GM12878 (cell line): ENCODE measurements at regions of chr6 and their contacts with region 1.

Region 1: GRCh38 chr6:109440331-109441068 is at the starts of genes PPIL6 and SMPD2:
- DNase-seq: no peak
- ATAC-seq: peak; percentile 91
- H3K4me3 ChIP-seq: peak within 1 kb of the TSS; percentile 87
- H3K27ac ChIP-seq: peak within 1 kb of the TSS; percentile 81
- H3K4me1 ChIP-seq: peaks cover 12% of the 10 kb centered on the region
- H3K27me3 ChIP-seq: no peaks in the 10 kb centered on the region
- CTCF ChIP-seq: peak in 2 of 3 experiments; percentile 18 to 33; a peak in 3 of 6 replicates
- EP300 ChIP-seq: no peak
- POLR2A ChIP-seq: peak; percentile 47; the same call in 1 of the 2 replicates
- RAD21 ChIP-seq: no peak
- polyA plus RNA-seq, gene PPIL6: not detected
- polyA plus RNA-seq, gene SMPD2: 0.06 to 0.73 TPM

Region 2: DNA sequence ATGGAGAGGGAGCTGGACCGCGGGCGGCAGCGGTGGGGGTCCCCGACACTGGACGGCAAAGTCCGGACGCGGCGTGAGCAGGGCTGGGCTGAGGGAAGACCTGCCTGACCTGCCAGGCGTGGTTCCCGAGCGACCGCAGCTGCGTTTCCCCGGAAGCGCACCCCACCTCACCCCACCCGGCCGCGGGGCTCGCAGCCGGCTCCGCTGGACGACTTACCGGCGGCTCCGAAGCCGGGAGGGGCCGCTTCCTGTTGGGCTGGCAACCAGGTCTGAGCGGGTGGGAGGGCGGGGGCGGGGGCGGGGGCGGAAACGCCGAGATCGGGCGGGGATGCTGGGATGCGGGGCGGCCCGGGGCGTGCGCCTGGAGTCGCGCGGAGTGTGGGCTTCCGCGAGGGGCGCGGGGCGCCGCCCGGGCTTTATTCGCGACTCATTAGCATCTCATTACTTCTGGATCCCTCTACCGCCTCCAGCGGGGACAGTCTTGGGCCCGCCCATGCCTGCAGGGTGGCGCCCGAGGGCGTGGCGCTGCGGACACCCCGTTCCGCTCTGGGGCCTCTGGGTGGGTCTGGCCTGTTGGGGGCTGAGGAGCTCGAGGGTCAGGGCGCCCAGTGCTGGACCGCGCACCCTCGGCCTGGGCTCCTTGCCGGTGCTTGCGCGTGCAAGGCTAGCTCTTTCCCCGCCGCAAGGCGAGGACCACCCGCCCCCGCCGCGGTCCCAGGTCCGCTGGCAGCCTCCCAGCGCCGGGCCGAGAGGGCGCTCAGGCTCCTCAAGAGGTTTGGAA is 15.2 kb after region 1 on chr6 and contains the start of gene MICAL1:
- CTCF ChIA-PET with region 1: interaction called, 30 read pairs
- POLR2A ChIA-PET with region 1: interaction called, 74 read pairs
- RAD21 ChIA-PET with region 1: interaction called, 17 read pairs
- SMC1A ChIA-PET with region 1: interaction called, 34 read pairs
- in situ Hi-C with region 1: no loop called
- intact Hi-C with region 1: no loop called
- DNase-seq: peak; percentile 45
- ATAC-seq: peak; percentile 78
- H3K4me3 ChIP-seq: peak within 1 kb of the TSS; percentile 89
- H3K27ac ChIP-seq: peak within 1 kb of the TSS; percentile 98
- H3K4me1 ChIP-seq: peaks cover 54% of the 10 kb centered on the region
- H3K27me3 ChIP-seq: no peaks in the 10 kb centered on the region
- CTCF ChIP-seq: peak in 2 of 3 experiments; percentile 19 to 45; a peak in 4 of 6 replicates
- EP300 ChIP-seq: 0 out of 4 replicates have a peak, but pooled peaks of 1 of the 2 experiments have one; percentile 20
- POLR2A ChIP-seq: peak; percentile 82
- RAD21 ChIP-seq: no peak
- polyA plus RNA-seq, gene MICAL1: 0.32 to 1.3 TPM

Region 3: DNA sequence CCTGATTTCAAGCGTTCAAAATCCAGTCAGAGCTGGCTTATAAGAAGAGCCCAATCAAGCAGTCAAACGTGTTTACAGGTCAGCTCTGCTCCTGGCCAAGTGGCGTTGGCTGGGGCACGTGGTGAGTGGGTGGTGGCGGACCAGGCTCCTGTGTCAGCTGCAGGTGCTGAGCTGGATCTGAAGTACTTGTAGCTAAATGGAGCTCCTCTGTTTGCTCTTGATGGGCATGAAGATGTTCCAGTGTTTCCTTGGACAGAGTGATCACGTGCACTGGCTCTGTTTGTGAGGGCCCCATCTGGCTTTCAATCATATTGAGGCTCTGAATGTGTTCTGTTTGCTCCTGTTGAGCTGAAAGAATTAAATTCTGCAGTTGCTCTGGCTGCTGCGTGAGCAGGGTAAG is 25.3 kb after region 1 on chr6:
- CTCF ChIA-PET with region 1: interaction called, 18 read pairs
- POLR2A ChIA-PET with region 1: interaction called, 4 read pairs
- RAD21 ChIA-PET with region 1: interaction called, 17 read pairs
- SMC1A ChIA-PET with region 1: interaction called, 11 read pairs
- in situ Hi-C with region 1: no loop called
- intact Hi-C with region 1: no loop called
- DNase-seq: no peak
- ATAC-seq: peak; percentile 32; the same call in 1 of the 3 replicates
- H3K4me3 ChIP-seq: no peak overlapping the region
- H3K27ac ChIP-seq: no peak overlapping the region
- H3K4me1 ChIP-seq: no peaks in the 10 kb centered on the region; the same call in none of the 2 replicates
- H3K27me3 ChIP-seq: no peaks in the 10 kb centered on the region
- CTCF ChIP-seq: no peak
- EP300 ChIP-seq: no peak
- POLR2A ChIP-seq: no peak
- RAD21 ChIP-seq: no peak

Region 4: GRCh38 chr6:109477725-109478124 is 37.2 kb after region 1 on chr6:
- CTCF ChIA-PET with region 1: interaction called, 21 read pairs
- POLR2A ChIA-PET with region 1: interaction called, 9 read pairs
- RAD21 ChIA-PET with region 1: interaction called, 34 read pairs
- SMC1A ChIA-PET with region 1: interaction called, 25 read pairs
- in situ Hi-C with region 1: no loop called
- intact Hi-C with region 1: loop called (anchors 1 kb)
- DNase-seq: no peak
- ATAC-seq: peak; percentile 77
- H3K4me3 ChIP-seq: peak overlapping the region; percentile 56
- H3K27ac ChIP-seq: peak overlapping the region; percentile 64
- H3K4me1 ChIP-seq: peaks cover 10% of the 10 kb centered on the region
- H3K27me3 ChIP-seq: no peaks in the 10 kb centered on the region
- CTCF ChIP-seq: no peak
- EP300 ChIP-seq: no peak
- POLR2A ChIP-seq: no peak
- RAD21 ChIP-seq: no peak

Region 5: DNA sequence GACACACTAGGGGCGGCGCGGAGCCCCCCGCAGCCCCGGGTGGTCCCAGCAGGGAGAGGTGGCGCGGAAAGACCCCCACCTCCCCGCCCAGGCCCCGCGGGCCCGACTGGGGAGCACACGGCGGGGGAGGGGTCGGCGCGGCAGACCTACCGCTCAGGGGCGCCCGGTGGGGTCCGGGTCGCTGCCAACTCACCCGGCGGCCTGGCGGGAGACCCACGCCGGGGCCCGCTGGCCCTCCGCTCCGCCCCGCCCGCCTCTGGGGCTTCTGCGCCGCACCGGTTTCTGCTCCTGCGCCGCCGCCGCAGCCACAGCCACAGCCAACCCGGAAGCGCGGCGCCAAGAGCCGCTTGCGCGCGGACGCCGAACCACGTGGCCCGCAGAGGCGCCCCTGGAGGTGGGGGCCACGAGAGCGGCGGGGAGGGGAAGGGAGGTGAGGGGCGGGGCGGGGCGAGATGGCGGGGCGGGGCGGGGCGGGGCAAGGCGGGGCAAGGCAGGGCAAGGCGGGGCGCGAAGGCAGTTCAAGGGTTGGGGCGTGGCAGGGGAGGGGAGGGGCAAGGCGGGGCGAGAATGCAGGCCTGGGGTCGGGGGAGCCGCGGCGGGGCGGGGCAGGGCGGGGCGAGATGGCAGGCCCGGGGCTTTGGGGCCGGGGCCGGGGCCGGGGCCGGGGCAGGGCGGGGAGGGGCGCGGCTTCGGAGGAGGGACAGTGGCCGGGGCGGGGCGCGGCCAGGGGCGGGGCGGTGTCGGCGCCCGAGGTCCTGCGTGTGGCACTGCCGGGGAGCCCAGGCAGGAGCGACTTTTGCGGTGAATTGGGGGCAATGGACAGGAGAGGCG is 42.6 kb after region 1 on chr6 and contains the start of gene ZBTB24:
- CTCF ChIA-PET with region 1: interaction called, 21 read pairs
- POLR2A ChIA-PET with region 1: interaction called, 9 read pairs
- RAD21 ChIA-PET with region 1: interaction called, 34 read pairs
- SMC1A ChIA-PET with region 1: interaction called, 25 read pairs
- in situ Hi-C with region 1: no loop called
- intact Hi-C with region 1: loop called (anchors 1 kb)
- DNase-seq: peak; percentile 41
- ATAC-seq: peak; percentile 89
- H3K4me3 ChIP-seq: peak within 1 kb of the TSS; percentile 86
- H3K27ac ChIP-seq: peak within 1 kb of the TSS; percentile 73
- H3K4me1 ChIP-seq: no peaks in the 10 kb centered on the region; the same call in 1 of the 2 replicates
- H3K27me3 ChIP-seq: no peaks in the 10 kb centered on the region
- CTCF ChIP-seq: no peak
- EP300 ChIP-seq: no peak
- POLR2A ChIP-seq: peak; percentile 86
- RAD21 ChIP-seq: no peak
- polyA plus RNA-seq, gene ZBTB24: 2.9 to 3.0 TPM

Region 6: DNA sequence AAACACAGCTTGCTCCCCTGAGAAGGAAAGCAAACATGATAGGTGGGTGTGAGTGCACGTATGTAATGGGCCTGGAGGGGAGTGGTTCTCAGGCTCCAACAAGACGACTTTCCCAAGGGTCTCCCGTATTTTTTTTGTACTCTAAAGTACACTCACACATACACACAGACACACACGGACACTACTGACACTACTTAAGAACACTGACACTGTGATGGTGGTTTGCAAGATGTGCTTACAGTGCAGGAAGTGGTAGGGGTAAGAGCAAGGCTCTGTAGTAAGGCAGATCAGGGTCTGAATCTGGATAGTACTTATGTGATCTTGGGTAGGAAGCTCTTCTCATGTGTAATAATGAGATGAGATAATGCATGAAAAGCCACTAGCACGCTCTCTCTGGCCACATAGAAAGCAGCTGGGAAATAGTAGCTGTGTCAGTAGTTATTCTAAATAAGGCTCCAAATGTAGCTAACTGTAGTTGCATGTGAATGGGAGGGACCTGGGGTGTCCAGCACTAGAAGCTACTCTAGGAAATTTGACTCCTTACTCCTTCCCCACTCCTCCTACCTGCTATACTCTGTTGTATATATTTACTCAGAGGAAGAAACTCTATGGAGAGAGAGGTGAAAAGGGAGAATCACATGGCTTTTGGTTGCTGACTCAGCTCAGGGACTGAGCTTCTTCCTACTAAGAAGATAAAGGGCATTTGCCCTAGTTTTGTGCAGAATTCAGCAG is 50.9 kb after region 1 on chr6:
- CTCF ChIA-PET with region 1: no interaction called
- POLR2A ChIA-PET with region 1: interaction called, 5 read pairs
- RAD21 ChIA-PET with region 1: interaction called, 4 read pairs
- SMC1A ChIA-PET with region 1: interaction called, 10 read pairs
- in situ Hi-C with region 1: no loop called
- intact Hi-C with region 1: no loop called
- DNase-seq: no peak
- ATAC-seq: peak; percentile 89
- H3K4me3 ChIP-seq: no peak overlapping the region
- H3K27ac ChIP-seq: no peak overlapping the region
- H3K4me1 ChIP-seq: no peaks in the 10 kb centered on the region
- H3K27me3 ChIP-seq: no peaks in the 10 kb centered on the region; a peak in 1 of 4 replicates
- CTCF ChIP-seq: no peak
- EP300 ChIP-seq: no peak
- POLR2A ChIP-seq: no peak
- RAD21 ChIP-seq: no peak

Region 7: GRCh38 chr6:109963598-109964170 is 523.2 kb after region 1 on chr6:
- CTCF ChIA-PET with region 1: no interaction called
- POLR2A ChIA-PET with region 1: no interaction called
- RAD21 ChIA-PET with region 1: no interaction called
- SMC1A ChIA-PET with region 1: no interaction called
- in situ Hi-C with region 1: no loop called
- intact Hi-C with region 1: no loop called
- DNase-seq: no peak
- ATAC-seq: no peak
- H3K4me3 ChIP-seq: no peak overlapping the region
- H3K27ac ChIP-seq: no peak overlapping the region
- H3K4me1 ChIP-seq: no peaks in the 10 kb centered on the region
- H3K27me3 ChIP-seq: no peaks in the 10 kb centered on the region; a peak in 1 of 4 replicates
- CTCF ChIP-seq: no peak
- EP300 ChIP-seq: no peak
- POLR2A ChIP-seq: no peak
- RAD21 ChIP-seq: no peak